ENCODE measurements at regions of chr15 and their contacts with region 1.

Region 1: DNA sequence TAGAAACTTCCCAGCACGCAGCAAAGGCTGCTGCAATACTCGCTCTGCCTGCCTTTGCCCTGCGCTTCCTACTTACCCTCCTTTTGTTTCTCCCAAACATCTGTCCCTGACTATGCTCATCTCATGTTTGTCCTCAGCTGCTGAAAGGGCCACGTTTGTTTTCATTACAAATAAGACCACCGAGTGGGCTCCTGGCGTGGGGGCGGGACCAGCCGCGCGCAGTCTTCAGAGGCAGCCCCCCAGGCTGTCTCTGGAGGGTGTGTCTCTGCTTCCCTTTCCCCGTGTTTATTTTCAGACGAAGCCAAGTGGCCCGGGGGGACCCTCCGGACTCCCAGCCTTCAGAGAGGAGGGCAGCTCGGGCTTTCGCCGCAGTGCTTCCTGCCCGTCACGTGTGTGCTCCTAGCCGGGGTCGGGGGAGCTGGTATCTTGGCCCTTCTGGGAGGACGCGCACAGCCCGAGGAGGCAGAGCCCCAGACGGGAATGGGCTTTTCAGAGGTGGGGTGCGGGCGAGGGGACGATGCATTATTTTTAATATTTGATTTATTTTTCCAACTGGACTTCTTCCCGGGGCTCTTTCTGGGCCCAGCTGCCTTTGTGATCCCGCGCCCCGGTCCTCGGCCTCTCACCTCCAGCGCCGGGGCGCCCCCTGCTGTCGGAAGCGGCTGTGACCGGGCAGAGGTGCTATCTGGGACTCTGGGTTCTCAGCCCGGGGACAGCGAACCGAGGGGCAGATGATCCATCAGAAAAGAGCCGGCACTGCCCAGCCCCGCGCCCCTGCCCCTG is 70.0 kb upstream of the CGNL1 start:
- DNase-seq: peak; percentile 87
- ATAC-seq: peak; percentile 73
- H3K4me3 ChIP-seq: peak overlapping the region; percentile 48 to 97 (median 66)
- H3K4me3 Mint-ChIP-seq: peak overlapping the region; percentile 85
- H3K27ac ChIP-seq: peak overlapping the region; percentile 57 to 87
- H3K27ac Mint-ChIP-seq: peak overlapping the region; percentile 87
- H3K4me1 ChIP-seq: peaks cover 36 to 44% of the 10 kb centered on the region in 2 donors
- H3K4me1 Mint-ChIP-seq: peaks cover 57% of the 10 kb centered on the region
- H3K27me3 ChIP-seq: no peaks in the 10 kb centered on the region
- H3K27me3 Mint-ChIP-seq: no peaks in the 10 kb centered on the region
- CTCF ChIP-seq: peak; percentile 95

Region 2: DNA sequence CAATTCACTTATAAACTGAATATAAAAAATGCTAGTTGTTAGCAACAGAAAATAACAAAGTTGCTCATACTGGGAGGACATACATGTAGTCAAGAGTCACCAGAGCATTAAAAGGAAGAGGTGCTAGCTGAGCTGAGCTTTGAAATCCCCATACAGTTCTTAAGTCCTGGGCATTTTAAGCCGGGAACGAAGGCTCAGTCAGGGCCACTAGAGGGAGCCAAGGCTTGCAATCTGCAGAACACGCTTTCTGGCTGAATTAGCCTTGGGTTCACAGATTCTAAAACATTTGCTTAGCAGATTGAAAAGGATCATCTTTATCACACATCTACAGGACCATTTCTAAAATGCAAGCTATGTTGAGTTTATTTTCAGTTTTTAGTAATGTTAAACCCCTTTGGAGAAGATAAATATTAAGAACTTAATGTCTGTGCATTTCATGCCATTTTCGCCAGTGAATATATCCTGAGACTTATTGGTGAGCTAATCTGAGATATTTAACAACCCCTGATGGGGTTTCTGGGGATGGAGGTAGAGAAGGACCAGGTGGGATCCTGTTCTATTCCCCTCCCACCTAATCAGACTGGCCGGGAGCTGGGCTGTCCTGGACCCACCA is 815.1 kb before region 1 on chr15:
- CTCF ChIA-PET with region 1: interaction called, 21 read pairs
- POLR2A ChIA-PET with region 1: no interaction called
- intact Hi-C with region 1: loop called (anchors 5 kb)
- DNase-seq: peak; percentile 75
- ATAC-seq: peak; percentile 81
- H3K4me3 ChIP-seq: no peak overlapping the region
- H3K4me3 Mint-ChIP-seq: no peak overlapping the region
- H3K27ac ChIP-seq: no peak overlapping the region
- H3K27ac Mint-ChIP-seq: no peak overlapping the region
- H3K4me1 ChIP-seq: no peaks in the 10 kb centered on the region
- H3K4me1 Mint-ChIP-seq: no peaks in the 10 kb centered on the region
- H3K27me3 ChIP-seq: no peaks in the 10 kb centered on the region
- H3K27me3 Mint-ChIP-seq: no peaks in the 10 kb centered on the region
- CTCF ChIP-seq: peak; percentile 90

Region 3: GRCh38 chr15:56821721-56822425 is 484.5 kb before region 1 on chr15:
- CTCF ChIA-PET with region 1: interaction called, 5 read pairs
- POLR2A ChIA-PET with region 1: no interaction called
- intact Hi-C with region 1: loop called (anchors 1 kb)
- DNase-seq: peak; percentile 39
- ATAC-seq: peak; percentile 60
- H3K4me3 ChIP-seq: no peak overlapping the region
- H3K4me3 Mint-ChIP-seq: no peak overlapping the region
- H3K27ac ChIP-seq: no peak overlapping the region
- H3K27ac Mint-ChIP-seq: no peak overlapping the region
- H3K4me1 ChIP-seq: no peaks in the 10 kb centered on the region
- H3K4me1 Mint-ChIP-seq: peaks cover 4% of the 10 kb centered on the region
- H3K27me3 ChIP-seq: no peaks in the 10 kb centered on the region
- H3K27me3 Mint-ChIP-seq: no peaks in the 10 kb centered on the region
- CTCF ChIP-seq: peak; percentile 60

Region 4: DNA sequence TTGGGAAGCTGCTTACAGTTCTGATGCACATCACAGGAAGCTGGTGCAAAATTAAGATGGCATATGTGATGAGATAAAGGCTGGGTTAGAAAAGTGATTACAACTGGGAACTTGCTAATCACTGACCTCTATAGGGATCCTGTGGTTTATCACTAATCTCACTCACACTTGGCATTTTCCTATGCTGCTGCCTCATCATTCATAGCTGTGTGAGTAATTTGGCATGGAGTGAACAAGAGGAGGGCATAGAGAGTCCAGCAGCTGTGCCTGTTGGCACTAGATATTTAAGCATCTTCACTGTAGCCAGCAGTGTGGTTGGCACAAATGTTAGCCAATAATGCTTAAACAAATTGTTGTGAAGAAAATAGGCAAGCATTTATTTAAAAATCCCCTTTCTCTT is 147.8 kb before region 1 on chr15:
- CTCF ChIA-PET with region 1: interaction called, 323 read pairs
- POLR2A ChIA-PET with region 1: no interaction called
- intact Hi-C with region 1: no loop called
- DNase-seq: no peak
- ATAC-seq: no peak
- H3K4me3 ChIP-seq: no peak overlapping the region
- H3K4me3 Mint-ChIP-seq: no peak overlapping the region
- H3K27ac ChIP-seq: no peak overlapping the region
- H3K27ac Mint-ChIP-seq: no peak overlapping the region
- H3K4me1 ChIP-seq: no peaks in the 10 kb centered on the region
- H3K4me1 Mint-ChIP-seq: peaks cover 7% of the 10 kb centered on the region
- H3K27me3 ChIP-seq: no peaks in the 10 kb centered on the region
- H3K27me3 Mint-ChIP-seq: no peaks in the 10 kb centered on the region
- CTCF ChIP-seq: no peak

Region 5: DNA sequence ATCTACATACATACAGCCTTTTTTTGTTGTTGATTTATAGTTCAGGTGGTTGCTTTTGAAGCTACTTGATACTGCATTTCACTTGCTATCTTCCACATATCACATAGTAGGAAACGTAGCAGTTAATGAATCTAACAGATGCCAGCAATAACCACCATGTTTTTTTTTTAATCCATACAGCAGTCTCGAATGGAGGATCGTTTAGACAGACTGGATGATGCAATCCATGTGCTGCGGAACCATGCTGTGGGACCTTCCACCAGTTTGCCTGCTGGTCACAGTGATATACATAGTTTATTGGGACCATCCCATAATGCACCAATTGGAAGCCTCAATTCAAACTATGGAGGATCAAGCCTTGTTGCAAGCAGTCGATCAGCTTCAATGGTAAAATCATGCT is 53.3 kb before region 1 on chr15:
- CTCF ChIA-PET with region 1: interaction called, 15 read pairs
- POLR2A ChIA-PET with region 1: no interaction called
- intact Hi-C with region 1: no loop called
- DNase-seq: no peak
- ATAC-seq: no peak
- H3K4me3 ChIP-seq: no peak overlapping the region
- H3K4me3 Mint-ChIP-seq: no peak overlapping the region
- H3K27ac ChIP-seq: no peak overlapping the region
- H3K27ac Mint-ChIP-seq: no peak overlapping the region
- H3K4me1 ChIP-seq: no peaks in the 10 kb centered on the region
- H3K4me1 Mint-ChIP-seq: peaks cover 3% of the 10 kb centered on the region
- H3K27me3 ChIP-seq: no peaks in the 10 kb centered on the region
- H3K27me3 Mint-ChIP-seq: no peaks in the 10 kb centered on the region
- CTCF ChIP-seq: no peak

Region 6: GRCh38 chr15:57706405-57707209 is 400.3 kb after region 1 on chr15 and contains the start of gene POLR2M:
- CTCF ChIA-PET with region 1: no interaction called
- POLR2A ChIA-PET with region 1: no interaction called
- intact Hi-C with region 1: loop called (anchors 10 kb)
- DNase-seq: peak; percentile 95
- ATAC-seq: peak; percentile 89
- H3K4me3 ChIP-seq: peak within 1 kb of the TSS; percentile 86 to 95 (median 88)
- H3K4me3 Mint-ChIP-seq: peak within 1 kb of the TSS; percentile 88
- H3K27ac ChIP-seq: peak within 1 kb of the TSS; percentile 86 to 95
- H3K27ac Mint-ChIP-seq: peak within 1 kb of the TSS; percentile 85
- H3K4me1 ChIP-seq: peaks cover 17 to 20% of the 10 kb centered on the region in 2 donors
- H3K4me1 Mint-ChIP-seq: peaks cover 45% of the 10 kb centered on the region
- H3K27me3 ChIP-seq: no peaks in the 10 kb centered on the region
- H3K27me3 Mint-ChIP-seq: peaks cover 14% of the 10 kb centered on the region
- CTCF ChIP-seq: no peak
- total RNA-seq, gene POLR2M: 67.4 and 73.2 TPM in 2 replicates

Measured in B cell (primary cell).